ENCODE measurements at regions of chr20 and their contacts with region 1.

Region 1: GRCh38 chr20:59159493-59160376 is 3.9 kb upstream of the ZNF831 start:
- DNase-seq: no peak

Region 2: DNA sequence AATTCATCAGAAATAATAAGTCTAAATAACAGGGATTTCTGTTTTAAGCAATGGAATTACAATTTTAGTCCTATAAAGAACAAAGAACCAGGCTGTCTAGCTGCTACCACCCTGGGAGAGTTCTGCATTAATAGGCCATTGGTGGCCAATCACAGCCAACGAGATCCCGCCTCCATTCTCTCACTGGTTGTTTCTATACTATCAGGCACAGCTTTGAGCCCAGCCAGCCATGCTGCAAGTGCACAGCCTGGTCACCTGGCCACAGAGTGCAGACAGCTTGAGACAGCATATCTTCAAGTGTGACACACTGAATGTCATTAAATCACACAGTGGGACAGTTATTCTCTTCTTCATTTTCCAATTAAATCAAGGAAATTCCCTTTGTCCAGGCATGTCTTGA is 866.3 kb before region 1 on chr20:
- intact Hi-C with region 1: loop called in 1 of 2 experiments (anchors 5 kb)
- DNase-seq: no peak

Region 3: GRCh38 chr20:59120491-59120890 is 39.2 kb before region 1 on chr20:
- intact Hi-C with region 1: no loop called
- DNase-seq: no peak

Region 4: GRCh38 chr20:59232618-59233017 is 72.9 kb after region 1 on chr20:
- intact Hi-C with region 1: no loop called
- DNase-seq: no peak

Region 5: DNA sequence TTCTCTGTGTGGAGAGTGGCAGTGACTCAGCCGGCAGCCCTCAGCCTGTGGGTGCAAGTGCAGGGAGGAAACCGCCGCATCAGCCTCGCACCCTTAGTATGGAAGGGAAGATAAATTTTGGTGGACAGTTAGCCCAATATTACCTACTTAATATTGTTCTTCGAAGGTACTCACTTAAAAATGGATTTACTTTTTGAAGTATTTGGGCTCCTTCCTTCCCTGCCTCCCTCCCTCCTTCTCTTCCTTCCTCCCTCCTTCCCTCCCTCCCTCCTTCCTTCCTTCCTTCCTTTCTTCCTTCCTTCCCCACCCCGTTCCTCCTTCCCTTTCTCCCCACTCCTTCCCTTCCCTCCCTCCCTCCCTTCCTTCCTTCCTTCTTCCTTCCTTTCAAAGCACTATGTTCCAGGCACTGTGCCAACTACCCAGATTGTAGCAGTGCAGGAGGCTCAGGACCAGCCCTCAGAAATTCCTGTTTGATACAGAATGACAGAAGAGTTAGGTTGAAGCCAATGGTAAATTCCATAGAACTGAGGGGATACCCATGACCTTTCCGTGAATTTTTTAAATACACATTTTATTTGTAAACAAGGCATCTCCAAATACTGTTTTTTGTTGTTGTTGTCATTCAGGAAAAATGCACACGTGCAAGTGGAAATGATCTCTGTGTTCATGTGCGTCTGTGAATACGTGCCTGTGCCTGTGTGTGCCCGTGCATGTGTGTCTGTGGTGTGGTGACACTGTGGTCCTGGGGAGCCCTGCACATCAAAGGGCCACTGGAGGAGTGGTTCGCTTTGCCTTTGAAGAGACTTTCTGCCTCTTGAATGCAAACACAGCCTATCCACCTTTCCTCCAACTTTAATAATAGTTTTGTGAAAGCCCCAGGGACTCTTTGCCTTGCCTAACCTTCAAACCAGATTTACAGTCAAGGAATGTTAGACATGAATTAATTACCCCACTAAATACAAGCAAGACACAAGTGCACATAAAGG is 282.4 kb after region 1 on chr20:
- intact Hi-C with region 1: no loop called
- DNase-seq: no peak

Measured in posterior vena cava (tissue), 2 donors.